IMR-90 (cell line): ENCODE measurements at regions of chr2 and their contacts with region 1.

Region 1: DNA sequence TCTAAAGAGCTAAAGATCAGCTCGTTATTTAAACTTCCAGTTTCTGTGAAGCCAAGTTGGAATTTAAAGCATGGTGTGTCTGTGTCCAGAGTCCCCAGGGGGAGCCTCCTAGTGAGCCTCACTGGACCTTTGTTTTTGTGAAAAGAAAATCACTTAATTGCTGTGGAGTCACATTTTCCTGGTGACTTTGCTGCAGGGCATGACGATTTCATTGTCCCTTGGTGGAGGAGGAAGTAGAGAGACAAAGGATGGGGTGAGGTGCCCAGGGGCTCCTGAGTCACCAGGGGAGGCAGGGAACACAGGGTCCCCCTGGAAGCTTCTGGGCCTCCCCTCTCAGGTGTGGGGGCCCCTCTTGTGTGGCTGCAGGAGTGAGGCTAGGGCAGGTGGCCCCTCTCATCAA is 19.7 kb downstream of the ATP6V1C2 start:
- DNase-seq: no peak
- ATAC-seq: no peak
- H3K4me3 ChIP-seq: no peak overlapping the region
- H3K27ac ChIP-seq: no peak overlapping the region
- H3K4me1 ChIP-seq: no peaks in the 10 kb centered on the region
- H3K27me3 ChIP-seq: peaks cover 13% of the 10 kb centered on the region
- CTCF ChIP-seq: no peak
- POLR2A ChIP-seq: no peak
- RAD21 ChIP-seq: no peak

Region 2: DNA sequence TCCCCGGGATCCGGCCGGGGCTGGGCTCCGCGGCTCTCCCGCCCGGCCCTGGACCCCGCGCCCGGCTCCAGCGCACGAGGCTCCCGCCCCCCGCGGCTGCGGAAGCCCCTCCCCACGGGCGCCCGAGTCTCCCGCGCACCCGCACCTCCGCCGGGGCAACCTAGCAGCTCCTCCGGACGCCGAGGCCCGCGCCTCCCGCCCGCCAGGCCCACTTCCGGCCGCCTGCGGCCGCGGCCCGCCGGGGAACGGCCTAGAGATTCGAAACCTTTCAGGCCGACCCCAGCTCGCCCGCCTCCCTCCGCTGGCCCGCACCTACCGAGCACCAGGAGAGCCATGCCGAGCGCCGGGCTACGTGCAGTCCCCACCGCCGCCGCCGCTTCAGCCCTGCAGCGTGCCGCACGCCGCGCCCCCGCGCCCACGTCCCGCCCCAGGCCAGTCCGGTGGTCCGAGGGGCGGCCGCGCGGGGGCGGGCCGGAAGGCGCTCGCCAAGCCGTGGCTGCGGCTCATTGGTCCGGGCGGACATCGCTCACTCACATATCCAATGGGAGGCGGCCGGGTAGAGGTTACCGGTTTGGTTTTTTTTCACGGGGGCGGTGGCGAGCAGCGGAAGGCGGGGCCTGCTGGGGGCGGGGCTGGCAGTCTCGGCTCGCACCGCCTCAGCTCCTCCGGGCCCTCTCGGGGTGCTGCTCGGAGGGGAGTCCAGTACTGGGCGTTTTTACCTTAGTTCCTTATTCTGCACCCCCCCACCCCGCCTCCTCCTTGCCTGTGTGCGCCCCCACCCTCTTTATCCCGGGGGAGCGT is 71.4 kb after region 1 on chr2 and contains the start of gene PDIA6:
- CTCF ChIA-PET with region 1: no interaction called
- POLR2A ChIA-PET with region 1: interaction called, 14 read pairs
- dilution Hi-C with region 1: no loop called
- in situ Hi-C with region 1: no loop called
- intact Hi-C with region 1: no loop called
- DNase-seq: peak; percentile 95
- ATAC-seq: peak; percentile 92
- H3K4me3 ChIP-seq: peak within 1 kb of the TSS; percentile 83
- H3K27ac ChIP-seq: peak within 1 kb of the TSS; percentile 84
- H3K4me1 ChIP-seq: peaks cover 10% of the 10 kb centered on the region
- H3K27me3 ChIP-seq: peaks cover 7% of the 10 kb centered on the region
- CTCF ChIP-seq: no peak
- POLR2A ChIP-seq: peak; percentile 70; the same call in 1 of the 2 replicates
- RAD21 ChIP-seq: no peak
- total RNA-seq, gene PDIA6: 204 and 384 TPM in 2 replicates